MCF 10A (cell line): ENCODE measurements at regions of chr7 and their contacts with region 1.

Region 1: DNA sequence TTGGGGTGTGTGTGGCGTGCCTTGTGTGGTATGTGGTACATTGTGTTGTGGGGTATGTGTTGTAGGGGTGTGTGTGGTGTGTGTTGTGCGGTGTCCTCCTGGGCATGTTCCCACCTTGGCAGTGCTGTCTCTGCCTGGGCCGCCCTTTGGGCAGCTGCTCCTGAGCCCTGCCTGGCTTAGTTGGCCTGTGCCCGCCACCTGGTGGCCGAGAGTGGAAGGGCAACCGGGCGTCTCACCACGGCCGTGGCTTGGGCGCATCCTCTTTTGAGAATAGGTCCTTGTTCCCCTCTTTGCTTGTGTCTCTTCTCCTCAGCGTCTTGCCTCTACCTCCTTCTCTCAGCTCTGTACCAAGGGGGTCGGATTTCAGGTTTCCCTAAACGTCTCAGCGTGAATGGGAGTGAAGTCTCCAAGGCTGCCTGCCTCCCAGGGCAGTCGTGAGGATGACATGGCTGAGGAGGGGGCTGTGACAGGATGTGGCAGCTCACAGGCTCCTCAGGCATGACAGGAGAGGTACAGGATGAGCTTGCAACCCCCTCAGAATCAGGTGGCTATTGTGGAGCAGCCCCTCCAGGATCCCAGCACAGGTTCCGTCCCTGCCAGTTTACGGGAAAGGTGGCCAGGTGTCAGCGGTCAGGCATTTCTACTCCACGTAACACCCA is 98.4 kb upstream of the PODXL start:
- DNase-seq: peak; percentile 73
- H3K4me3 Mint-ChIP-seq: no peak overlapping the region
- H3K27ac Mint-ChIP-seq: no peak overlapping the region
- H3K4me1 Mint-ChIP-seq: no peaks in the 10 kb centered on the region
- H3K27me3 Mint-ChIP-seq: peaks cover 12% of the 10 kb centered on the region
- CTCF ChIP-seq: peak; percentile 90

Region 2: DNA sequence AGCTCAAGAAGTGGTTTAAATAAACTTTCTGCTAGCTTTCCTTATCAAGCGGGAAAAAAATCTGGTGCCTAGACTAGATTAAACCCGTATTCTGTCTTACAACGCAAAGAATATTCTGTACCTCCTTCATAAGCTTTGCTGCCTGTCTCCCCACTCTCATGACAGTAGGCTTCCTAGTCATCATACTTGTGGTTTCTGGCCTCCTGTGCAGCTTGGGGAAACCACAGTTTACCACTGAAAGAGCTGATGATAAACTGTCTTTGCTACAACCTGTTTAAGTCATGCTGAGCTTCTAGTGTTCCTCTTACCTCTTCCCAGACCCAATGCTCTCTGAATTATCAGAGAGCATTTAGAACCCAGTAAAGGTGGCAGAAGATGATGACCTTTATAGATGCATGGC is 153.4 kb before region 1 on chr7:
- CTCF ChIA-PET with region 1: interaction called, 204 read pairs
- POLR2A ChIA-PET with region 1: no interaction called
- intact Hi-C with region 1: no loop called
- DNase-seq: no peak
- H3K4me3 Mint-ChIP-seq: no peak overlapping the region
- H3K27ac Mint-ChIP-seq: no peak overlapping the region
- H3K4me1 Mint-ChIP-seq: no peaks in the 10 kb centered on the region
- H3K27me3 Mint-ChIP-seq: no peaks in the 10 kb centered on the region
- CTCF ChIP-seq: no peak

Region 3: DNA sequence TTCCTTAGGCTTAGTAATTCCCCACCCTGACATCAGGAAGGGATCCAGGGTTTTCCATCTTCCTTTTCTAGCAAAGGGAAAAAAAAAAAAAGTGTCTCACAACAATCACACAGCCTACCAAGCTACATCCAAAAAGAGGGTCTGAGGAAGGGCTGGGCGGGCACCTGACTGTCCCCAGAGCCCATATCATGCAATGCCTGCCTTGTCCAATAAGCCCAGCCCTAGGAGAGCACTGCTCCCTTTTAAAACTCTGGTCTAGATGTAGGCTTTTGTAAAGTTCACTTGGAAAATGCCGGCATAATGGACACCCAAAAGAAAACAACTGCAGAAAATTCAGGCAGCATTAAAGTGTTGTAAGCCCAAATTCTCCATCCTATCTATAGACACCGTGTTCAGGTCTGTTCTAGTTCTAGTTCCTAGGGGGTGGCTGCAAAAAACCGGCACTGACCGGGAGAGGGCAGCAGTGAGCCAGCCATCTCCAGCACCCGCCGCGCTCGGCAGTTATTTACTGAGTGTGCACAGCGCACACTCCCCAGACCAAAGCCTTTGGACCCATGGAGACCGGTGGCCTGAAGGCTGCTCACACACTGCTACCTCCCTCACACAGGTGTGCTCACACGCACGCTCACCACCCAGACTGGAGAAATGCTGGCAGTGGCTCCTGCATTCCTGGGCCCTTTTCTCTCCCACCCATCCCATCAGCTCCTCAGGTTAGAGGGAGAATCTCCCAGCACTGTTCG is 147.0 kb before region 1 on chr7:
- CTCF ChIA-PET with region 1: interaction called, 204 read pairs
- POLR2A ChIA-PET with region 1: interaction called, 6 read pairs
- intact Hi-C with region 1: loop called (anchors 1 kb)
- DNase-seq: peak; percentile 79
- H3K4me3 Mint-ChIP-seq: no peak overlapping the region
- H3K27ac Mint-ChIP-seq: no peak overlapping the region
- H3K4me1 Mint-ChIP-seq: peaks cover 8% of the 10 kb centered on the region
- H3K27me3 Mint-ChIP-seq: no peaks in the 10 kb centered on the region
- CTCF ChIP-seq: peak; percentile 85

Region 4: DNA sequence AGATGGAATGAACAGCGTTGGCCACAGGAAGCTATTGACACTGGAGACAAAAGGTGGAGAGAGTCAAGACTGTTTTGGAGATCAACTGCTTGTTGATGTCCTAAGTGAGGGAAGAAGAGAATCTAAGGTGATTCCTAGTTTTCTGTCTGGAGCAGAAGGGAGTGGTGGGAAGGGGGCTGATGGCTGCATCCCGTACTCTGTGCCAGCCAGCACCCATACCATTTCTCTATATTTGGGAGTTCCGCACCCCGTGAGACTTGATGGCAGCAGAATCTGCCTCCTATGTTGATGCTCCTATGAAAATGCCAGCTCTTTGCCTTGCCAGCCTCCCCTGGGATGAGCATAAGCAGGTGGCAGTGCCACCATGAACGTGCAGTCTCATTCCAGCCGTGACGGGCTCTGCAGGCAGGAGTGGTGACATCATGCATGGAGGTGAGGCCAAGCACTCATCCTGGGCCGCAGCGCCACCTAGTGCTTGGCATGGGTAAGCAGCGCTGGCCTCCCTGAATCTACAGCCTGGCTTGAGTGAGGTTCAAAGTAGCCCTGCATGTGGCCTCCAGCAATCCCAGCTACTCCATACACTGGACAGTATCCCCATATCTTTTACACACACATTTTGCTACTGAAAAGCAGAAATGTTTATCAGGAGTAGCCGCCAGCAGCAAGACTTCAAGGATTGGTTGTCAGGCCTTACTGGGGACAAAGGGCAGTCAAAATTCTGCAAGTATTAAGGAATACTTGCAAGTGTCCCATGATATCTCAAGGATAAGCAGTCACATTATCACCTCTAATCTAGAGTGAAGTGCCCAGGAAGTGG is 141.3 kb before region 1 on chr7:
- CTCF ChIA-PET with region 1: interaction called, 204 read pairs
- POLR2A ChIA-PET with region 1: interaction called, 6 read pairs
- intact Hi-C with region 1: loop called (anchors 1 kb)
- DNase-seq: peak; percentile 86
- H3K4me3 Mint-ChIP-seq: no peak overlapping the region
- H3K27ac Mint-ChIP-seq: peak overlapping the region; percentile 17
- H3K4me1 Mint-ChIP-seq: peaks cover 7% of the 10 kb centered on the region
- H3K27me3 Mint-ChIP-seq: no peaks in the 10 kb centered on the region
- CTCF ChIP-seq: peak; percentile 87

Region 5: GRCh38 chr7:131546583-131547111 is 108.2 kb before region 1 on chr7:
- CTCF ChIA-PET with region 1: interaction called, 5 read pairs
- POLR2A ChIA-PET with region 1: no interaction called
- intact Hi-C with region 1: loop called (anchors 2 kb)
- DNase-seq: peak; percentile 33
- H3K4me3 Mint-ChIP-seq: no peak overlapping the region
- H3K27ac Mint-ChIP-seq: no peak overlapping the region
- H3K4me1 Mint-ChIP-seq: peaks cover 14% of the 10 kb centered on the region
- H3K27me3 Mint-ChIP-seq: no peaks in the 10 kb centered on the region
- CTCF ChIP-seq: peak; percentile 60

Region 6: GRCh38 chr7:131667699-131668098 is 12.9 kb after region 1 on chr7:
- CTCF ChIA-PET with region 1: interaction called, 11 read pairs
- POLR2A ChIA-PET with region 1: no interaction called
- intact Hi-C with region 1: no loop called
- DNase-seq: no peak
- H3K4me3 Mint-ChIP-seq: no peak overlapping the region
- H3K27ac Mint-ChIP-seq: no peak overlapping the region
- H3K4me1 Mint-ChIP-seq: no peaks in the 10 kb centered on the region
- H3K27me3 Mint-ChIP-seq: peaks cover 70% of the 10 kb centered on the region
- CTCF ChIP-seq: no peak

Region 7: GRCh38 chr7:132218876-132219275 is 564.1 kb after region 1 on chr7:
- CTCF ChIA-PET with region 1: no interaction called
- POLR2A ChIA-PET with region 1: no interaction called
- intact Hi-C with region 1: no loop called
- DNase-seq: no peak
- H3K4me3 Mint-ChIP-seq: no peak overlapping the region
- H3K27ac Mint-ChIP-seq: no peak overlapping the region
- H3K4me1 Mint-ChIP-seq: no peaks in the 10 kb centered on the region
- H3K27me3 Mint-ChIP-seq: no peaks in the 10 kb centered on the region
- CTCF ChIP-seq: no peak